GM10248 (cell line): ENCODE measurements at regions of chr4 and their contacts with region 1.

Region 1: GRCh38 chr4:5998333-5998936 is 19.8 kb downstream of the C4orf50 start:
- DNase-seq: peak; percentile 77
- CTCF ChIP-seq: peak; percentile 85

Region 2: GRCh38 chr4:5982156-5982973 is 16.1 kb before region 1 on chr4:
- CTCF ChIA-PET with region 1: interaction called, 29 read pairs
- POLR2A ChIA-PET with region 1: no interaction called
- DNase-seq: no peak
- CTCF ChIP-seq: no peak

Region 3: GRCh38 chr4:6011686-6012085 is 13.3 kb after region 1 on chr4:
- CTCF ChIA-PET with region 1: interaction called, 41 read pairs
- POLR2A ChIA-PET with region 1: no interaction called
- DNase-seq: no peak
- CTCF ChIP-seq: no peak

Region 4: GRCh38 chr4:6032249-6033244 is 34.1 kb after region 1 on chr4:
- CTCF ChIA-PET with region 1: interaction called, 12 read pairs
- POLR2A ChIA-PET with region 1: no interaction called
- DNase-seq: no peak
- CTCF ChIP-seq: no peak

Region 5: DNA sequence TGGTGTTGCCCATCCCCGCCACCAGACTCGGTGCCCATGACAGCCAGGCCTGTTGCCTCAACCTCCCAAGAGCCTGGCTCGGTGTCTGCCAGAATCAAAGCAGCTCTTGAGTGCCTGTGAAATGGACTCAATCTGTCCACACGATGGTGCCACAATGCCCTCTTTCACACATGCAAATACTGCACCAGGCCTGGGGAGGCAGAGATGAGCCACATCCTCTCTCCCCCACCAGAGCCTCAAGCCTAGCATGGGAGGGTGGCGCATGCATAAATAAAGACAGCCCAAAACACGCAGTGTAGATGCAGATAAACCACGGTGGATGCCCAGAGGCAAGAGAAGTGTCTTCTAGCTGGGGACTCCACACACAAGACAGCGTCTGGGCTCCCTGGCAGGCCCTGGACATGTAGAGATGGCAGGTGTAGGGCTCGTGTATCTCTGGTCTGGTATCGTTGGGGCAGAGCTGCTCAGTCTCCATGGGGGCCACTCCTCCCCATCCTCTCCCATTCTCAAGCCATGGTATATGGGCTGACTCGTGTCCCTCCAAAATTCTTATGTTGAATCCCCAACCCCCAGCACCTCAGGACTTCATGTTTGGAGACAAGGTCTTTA is 136.3 kb after region 1 on chr4:
- CTCF ChIA-PET with region 1: no interaction called
- POLR2A ChIA-PET with region 1: no interaction called
- DNase-seq: peak; percentile 63
- CTCF ChIP-seq: peak; percentile 26

Region 6: GRCh38 chr4:6546681-6547447 is 548.4 kb after region 1 on chr4:
- CTCF ChIA-PET with region 1: interaction called, 15 read pairs
- POLR2A ChIA-PET with region 1: interaction called, 4 read pairs
- DNase-seq: peak; percentile 78
- CTCF ChIP-seq: peak; percentile 94